ENCODE measurements at regions of chr4 and their contacts with region 1.

Region 1: DNA sequence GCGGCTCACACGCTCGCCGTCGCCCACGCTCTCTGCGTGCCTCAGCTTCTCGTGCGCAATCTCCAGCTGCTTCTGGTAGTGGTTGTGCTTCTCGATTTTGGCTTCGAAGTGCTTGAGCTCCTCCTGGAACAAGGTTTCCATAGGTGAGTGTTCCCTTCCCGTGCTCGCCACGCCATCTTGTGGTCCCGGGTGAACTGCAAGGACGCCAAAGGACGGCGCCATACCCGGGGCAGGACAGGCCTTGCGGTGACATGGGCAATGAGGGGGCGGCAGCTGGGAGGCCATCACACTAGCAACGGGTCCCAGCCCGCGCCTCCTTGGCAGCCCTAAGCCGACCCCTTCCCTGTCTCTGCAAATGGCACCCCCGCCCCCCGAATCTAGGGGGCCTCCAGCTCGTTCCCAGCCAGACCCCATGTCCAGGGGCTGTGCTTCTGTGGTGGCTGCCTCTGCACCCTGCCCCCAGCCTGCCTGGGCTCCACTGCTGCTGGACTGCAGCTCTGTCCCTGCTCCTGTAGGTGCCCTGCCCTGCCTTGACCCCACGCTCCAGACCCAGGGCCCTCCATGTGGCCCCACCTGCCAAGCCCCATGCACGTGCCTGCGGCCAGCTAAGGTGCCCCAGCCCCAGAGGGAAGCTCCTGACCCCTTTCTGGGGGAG is 17.3 kb downstream of the LRPAP1 start:
- DNase-seq: peak in 1 of 2 experiments; percentile 81
- H3K4me3 ChIP-seq: no peak overlapping the region
- H3K27ac ChIP-seq: no peak overlapping the region
- H3K4me1 ChIP-seq: 0 out of 7 replicates have a peak, but pooled peaks cover 0 to 2% (median under 1%) of the 10 kb centered on the region in 4 experiments
- H3K27me3 ChIP-seq: no peaks in the 10 kb centered on the region
- CTCF ChIP-seq: peak in 2 of 3 experiments; percentile 69 to 78; a peak in 3 of 4 replicates
- EP300 ChIP-seq: no peak
- POLR2A ChIP-seq: no peak
- RAD21 ChIP-seq: peak; percentile 57 to 67

Region 2: GRCh38 chr4:3148926-3149325 is 366.0 kb before region 1 on chr4:
- CTCF ChIA-PET with region 1: no interaction called
- POLR2A ChIA-PET with region 1: no interaction called
- DNase-seq: no peak
- H3K4me3 ChIP-seq: no peak overlapping the region
- H3K27ac ChIP-seq: no peak overlapping the region
- H3K4me1 ChIP-seq: no peaks in the 10 kb centered on the region
- H3K27me3 ChIP-seq: no peaks in the 10 kb centered on the region
- CTCF ChIP-seq: no peak
- EP300 ChIP-seq: no peak
- POLR2A ChIP-seq: no peak
- RAD21 ChIP-seq: no peak

Region 3: GRCh38 chr4:3426465-3427133 is 88.3 kb before region 1 on chr4:
- CTCF ChIA-PET with region 1: interaction called, 12 read pairs
- POLR2A ChIA-PET with region 1: no interaction called
- DNase-seq: no peak
- H3K4me3 ChIP-seq: no peak overlapping the region
- H3K27ac ChIP-seq: no peak overlapping the region
- H3K4me1 ChIP-seq: no peaks in the 10 kb centered on the region; a peak in 1 of 7 replicates
- H3K27me3 ChIP-seq: no peaks in the 10 kb centered on the region; a peak in 1 of 7 replicates
- CTCF ChIP-seq: no peak
- EP300 ChIP-seq: no peak
- POLR2A ChIP-seq: no peak
- RAD21 ChIP-seq: no peak

Region 4: DNA sequence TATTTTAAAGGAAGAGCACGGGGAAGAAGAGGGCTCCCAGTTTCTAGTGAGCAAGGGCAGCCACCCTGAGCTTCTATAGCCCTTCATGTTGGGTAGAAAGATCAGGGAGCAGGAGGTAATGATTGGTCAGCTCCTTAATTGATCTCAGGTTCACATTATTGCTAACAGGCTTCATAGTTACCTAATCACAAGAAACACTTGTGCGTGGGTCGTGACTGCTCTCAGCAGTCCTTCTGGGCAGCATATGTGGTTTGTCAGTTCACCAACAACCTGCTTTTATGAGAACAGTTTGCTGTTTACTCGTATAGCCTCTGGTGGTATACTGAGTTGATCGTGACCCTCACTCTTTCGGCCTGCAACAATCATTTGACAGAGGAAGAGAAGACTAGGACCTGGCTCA is 56.6 kb before region 1 on chr4:
- CTCF ChIA-PET with region 1: no interaction called
- POLR2A ChIA-PET with region 1: no interaction called
- DNase-seq: no peak
- H3K4me3 ChIP-seq: no peak overlapping the region
- H3K27ac ChIP-seq: no peak overlapping the region
- H3K4me1 ChIP-seq: peaks cover 0 to 6% (median 0%) of the 10 kb centered on the region in 4 experiments; a peak in 1 of 7 replicates
- H3K27me3 ChIP-seq: peaks cover 6 to 39% (median 20%) of the 10 kb centered on the region in 4 experiments
- CTCF ChIP-seq: no peak
- EP300 ChIP-seq: no peak
- POLR2A ChIP-seq: no peak
- RAD21 ChIP-seq: no peak

Region 5: GRCh38 chr4:3470244-3471097 is 44.5 kb before region 1 on chr4:
- CTCF ChIA-PET with region 1: interaction called, 12 read pairs
- POLR2A ChIA-PET with region 1: no interaction called
- DNase-seq: no peak
- H3K4me3 ChIP-seq: no peak overlapping the region
- H3K27ac ChIP-seq: no peak overlapping the region
- H3K4me1 ChIP-seq: peaks cover 0 to 3% (median 1%) of the 10 kb centered on the region in 4 experiments; a peak in 2 of 7 replicates
- H3K27me3 ChIP-seq: peaks cover 1 to 53% (median 34%) of the 10 kb centered on the region in 4 experiments; a peak in 6 of 7 replicates
- CTCF ChIP-seq: no peak
- EP300 ChIP-seq: no peak
- POLR2A ChIP-seq: no peak
- RAD21 ChIP-seq: no peak

Region 6: DNA sequence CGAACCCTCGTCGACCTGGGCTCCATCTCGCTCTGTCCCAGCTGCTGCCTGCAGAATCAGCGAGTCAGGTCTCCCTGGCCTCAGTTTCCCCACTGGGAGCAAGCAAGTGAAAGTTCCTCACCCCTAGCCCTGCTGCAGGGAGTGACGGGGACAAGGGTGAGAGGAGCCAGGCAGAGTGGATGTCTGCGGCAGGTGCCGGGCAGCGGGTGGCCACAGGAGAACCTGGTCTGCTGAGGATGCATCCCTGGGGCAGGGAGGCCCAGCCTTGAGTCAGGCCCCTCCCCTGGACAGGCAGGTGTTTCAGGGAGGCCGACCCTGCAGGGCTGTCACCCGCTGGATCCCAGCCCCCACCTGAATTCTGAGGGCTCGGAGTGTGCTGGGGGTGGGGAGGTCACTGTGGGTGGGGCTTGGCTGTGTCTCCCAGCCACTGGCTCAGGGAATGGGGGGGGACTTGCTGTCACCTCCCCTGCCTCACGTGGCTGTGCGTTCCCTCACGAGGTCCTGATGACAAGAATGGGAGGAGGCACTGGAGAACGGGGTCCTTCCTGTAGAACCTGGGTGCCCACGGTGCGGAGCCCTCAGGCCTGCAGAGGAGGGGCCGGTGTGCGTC is 15.9 kb before region 1 on chr4:
- CTCF ChIA-PET with region 1: interaction called, 72 read pairs
- POLR2A ChIA-PET with region 1: interaction called, 15 read pairs
- DNase-seq: no peak
- H3K4me3 ChIP-seq: no peak overlapping the region
- H3K27ac ChIP-seq: no peak overlapping the region
- H3K4me1 ChIP-seq: peaks cover 0 to 6% (median 3%) of the 10 kb centered on the region in 4 experiments; a peak in 5 of 7 replicates
- H3K27me3 ChIP-seq: peaks cover 14 to 44% (median 34%) of the 10 kb centered on the region in 4 experiments; a peak in 6 of 7 replicates
- CTCF ChIP-seq: no peak
- EP300 ChIP-seq: no peak
- POLR2A ChIP-seq: no peak
- RAD21 ChIP-seq: no peak

Region 7: DNA sequence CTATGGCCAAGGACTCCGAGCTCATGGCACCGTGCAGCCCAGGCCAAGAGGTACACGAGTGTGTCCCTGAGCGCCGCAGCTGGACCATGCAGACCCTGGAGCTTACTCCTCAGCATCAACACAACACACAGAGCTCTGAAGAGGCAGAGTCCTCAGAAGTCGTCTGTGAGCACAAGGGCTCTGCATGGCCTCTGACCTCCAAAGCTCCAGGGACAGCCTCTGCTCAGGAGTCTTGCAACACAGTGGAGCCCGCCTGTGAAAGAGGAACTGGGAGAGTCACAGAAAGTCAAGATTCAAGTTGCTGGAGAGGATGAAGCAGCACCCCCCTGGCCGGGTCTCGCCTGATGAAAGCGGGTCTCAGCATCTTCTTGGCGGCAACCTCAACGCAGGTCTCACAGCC is 14.4 kb after region 1 on chr4:
- CTCF ChIA-PET with region 1: interaction called, 43 read pairs
- POLR2A ChIA-PET with region 1: interaction called, 9 read pairs
- DNase-seq: no peak
- H3K4me3 ChIP-seq: no peak overlapping the region
- H3K27ac ChIP-seq: no peak overlapping the region
- H3K4me1 ChIP-seq: peaks cover 3 to 18% (median 12%) of the 10 kb centered on the region in 4 experiments
- H3K27me3 ChIP-seq: peaks cover 1 to 18% (median 13%) of the 10 kb centered on the region in 4 experiments; a peak in 5 of 7 replicates
- CTCF ChIP-seq: no peak
- EP300 ChIP-seq: no peak
- POLR2A ChIP-seq: no peak
- RAD21 ChIP-seq: no peak

Measured in H1 (cell line).